Mammary epithelial cell (primary cell): ENCODE measurements at regions of chr20 and their contacts with region 1.

Region 1: DNA sequence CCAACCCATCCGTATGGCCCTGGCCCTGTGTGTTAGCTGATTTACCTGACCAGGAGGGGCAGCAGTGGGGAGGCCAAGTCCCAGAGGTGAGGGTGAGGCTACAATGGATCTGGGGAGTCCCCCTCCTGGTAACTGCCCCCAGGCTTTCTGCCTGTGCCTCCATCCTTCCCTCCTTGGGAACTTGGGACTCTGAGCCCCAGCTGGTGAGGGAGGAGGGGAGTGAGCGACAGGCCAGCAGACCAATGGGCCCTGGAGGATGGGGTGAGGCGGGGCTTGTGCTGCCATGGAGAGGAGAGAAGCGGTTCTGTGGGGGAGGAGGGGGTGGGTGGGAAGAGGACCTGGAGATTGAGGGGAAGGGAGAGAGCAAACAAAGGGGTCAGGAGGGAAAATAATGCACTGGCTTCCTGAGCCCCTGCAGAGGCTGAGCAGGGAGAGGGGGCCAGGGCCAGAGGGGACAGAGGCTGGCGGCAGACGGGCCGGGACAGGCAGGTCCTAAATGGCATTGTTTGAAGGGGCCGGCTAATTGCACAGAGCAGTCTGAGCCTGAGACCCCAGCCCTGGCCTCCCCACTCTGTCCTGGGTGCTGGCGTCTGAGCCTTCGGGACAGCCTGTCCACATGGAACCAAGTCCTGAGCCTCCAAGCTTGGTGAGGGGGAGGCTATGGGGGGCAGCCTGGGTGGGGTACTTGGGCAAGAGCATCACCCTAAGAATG is 17.5 kb downstream of the DNMT3B start:
- DNase-seq: no peak
- H3K4me3 ChIP-seq: no peak overlapping the region
- H3K27ac ChIP-seq: no peak overlapping the region
- H3K4me1 ChIP-seq: peaks cover 24% of the 10 kb centered on the region
- H3K27me3 ChIP-seq: no peaks in the 10 kb centered on the region
- CTCF ChIP-seq: no peak

Region 2: GRCh38 chr20:32521780-32522525 is 257.7 kb before region 1 on chr20:
- CTCF ChIA-PET with region 1: no interaction called
- dilution Hi-C with region 1: loop called (anchors 10 kb)
- in situ Hi-C with region 1: no loop called
- intact Hi-C with region 1: loop called (anchors 5 kb)
- DNase-seq: no peak
- H3K4me3 ChIP-seq: no peak overlapping the region
- H3K27ac ChIP-seq: no peak overlapping the region
- H3K4me1 ChIP-seq: peaks cover 9% of the 10 kb centered on the region
- H3K27me3 ChIP-seq: no peaks in the 10 kb centered on the region
- CTCF ChIP-seq: peak; percentile 78 to 87

Region 3: GRCh38 chr20:32681175-32682084 is 98.2 kb before region 1 on chr20:
- CTCF ChIA-PET with region 1: interaction called, 5 read pairs
- dilution Hi-C with region 1: loop called (anchors 5 kb)
- in situ Hi-C with region 1: loop called (anchors 5 kb)
- intact Hi-C with region 1: no loop called
- DNase-seq: peak; percentile 78
- H3K4me3 ChIP-seq: no peak overlapping the region
- H3K27ac ChIP-seq: no peak overlapping the region
- H3K4me1 ChIP-seq: peaks cover 20% of the 10 kb centered on the region
- H3K27me3 ChIP-seq: no peaks in the 10 kb centered on the region
- CTCF ChIP-seq: no peak

Region 4: GRCh38 chr20:32743237-32744112 is 36.2 kb before region 1 on chr20 and contains the start of gene COMMD7:
- CTCF ChIA-PET with region 1: no interaction called
- dilution Hi-C with region 1: no loop called
- in situ Hi-C with region 1: no loop called
- intact Hi-C with region 1: loop called (anchors 5 kb)
- DNase-seq: peak; percentile 47
- H3K4me3 ChIP-seq: peak within 1 kb of the TSS; percentile 61 to 66 (median 64)
- H3K27ac ChIP-seq: no peak within 1 kb of the TSS
- H3K4me1 ChIP-seq: peaks cover 11% of the 10 kb centered on the region
- H3K27me3 ChIP-seq: no peaks in the 10 kb centered on the region
- CTCF ChIP-seq: no peak
- total RNA-seq, gene COMMD7: 29.4 to 29.5 TPM

Region 5: GRCh38 chr20:32810941-32811340 is 31.3 kb after region 1 on chr20:
- CTCF ChIA-PET with region 1: no interaction called
- dilution Hi-C with region 1: loop called (anchors 5 kb)
- in situ Hi-C with region 1: no loop called
- intact Hi-C with region 1: no loop called
- DNase-seq: no peak
- H3K4me3 ChIP-seq: no peak overlapping the region
- H3K27ac ChIP-seq: no peak overlapping the region
- H3K4me1 ChIP-seq: peaks cover 15% of the 10 kb centered on the region
- H3K27me3 ChIP-seq: no peaks in the 10 kb centered on the region
- CTCF ChIP-seq: no peak